ENCODE measurements at regions of chr12 and their contacts with region 1.

Region 1: DNA sequence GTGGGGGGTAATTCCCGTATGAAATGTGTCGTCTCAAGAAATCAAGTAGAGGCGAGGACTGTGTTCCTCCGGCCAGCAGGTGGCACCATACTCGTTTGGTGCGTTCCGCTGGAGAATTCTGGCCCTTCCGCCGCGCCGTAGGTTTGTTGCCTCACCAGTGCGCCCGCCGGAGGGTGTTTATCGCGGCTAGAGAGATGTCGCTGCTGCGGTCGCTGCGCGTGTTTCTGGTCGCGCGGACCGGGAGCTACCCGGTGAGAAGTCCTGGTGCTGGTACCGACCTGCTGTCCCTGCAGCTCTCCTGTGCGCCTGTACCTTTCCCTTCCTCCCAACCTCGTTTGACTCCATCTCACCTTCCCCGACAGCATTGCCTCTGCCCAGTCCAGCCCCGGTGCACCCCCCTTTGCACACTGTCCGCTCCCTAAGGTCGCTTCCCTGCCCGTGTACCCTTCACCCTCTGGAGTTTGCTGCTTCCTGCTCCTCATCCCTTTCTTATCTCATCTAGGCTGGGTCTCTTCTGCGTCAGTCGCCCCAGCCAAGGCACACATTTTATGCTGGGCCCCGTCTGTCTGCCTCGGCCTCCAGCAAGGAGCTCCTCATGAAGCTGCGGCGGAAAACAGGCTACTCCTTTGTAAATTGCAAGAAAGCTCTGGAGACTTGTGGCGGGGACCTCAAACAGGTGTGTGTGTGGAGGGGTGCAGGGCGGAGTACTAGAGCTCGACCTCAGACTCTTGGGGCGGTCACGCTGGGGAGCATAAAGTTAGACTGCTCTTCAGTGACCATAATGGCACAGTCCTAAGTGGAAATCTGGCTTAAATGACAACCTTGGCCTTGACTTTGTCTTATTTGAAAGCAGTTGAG is at the start of gene TSFM:
- DNase-seq: peak; percentile 93 to 94
- ATAC-seq: peak; percentile 96
- H3K4me3 ChIP-seq: peak within 1 kb of the TSS; percentile 89 to 98 (median 94)
- H3K27ac ChIP-seq: peak within 1 kb of the TSS; percentile 80 to 89 (median 85)
- H3K4me1 ChIP-seq: peaks cover 9 to 15% of the 10 kb centered on the region in 2 donors
- H3K27me3 ChIP-seq: no peaks in the 10 kb centered on the region
- CTCF ChIP-seq: peak; percentile 95 to 99 (median 97)
- POLR2A ChIP-seq: peak; percentile 56 to 75
- total RNA-seq, gene TSFM: 37.6 to 47.5 (median 40.1) TPM

Region 2: GRCh38 chr12:57744777-57745484 is 37.9 kb before region 1 on chr12 and contains the start of gene TSPAN31:
- in situ Hi-C with region 1: no loop called
- intact Hi-C with region 1: loop called (anchors 5 kb)
- DNase-seq: peak; percentile 96 to 97
- ATAC-seq: peak; percentile 97 to 98
- H3K4me3 ChIP-seq: peak within 1 kb of the TSS; percentile 81 to 96 (median 94)
- H3K27ac ChIP-seq: peak within 1 kb of the TSS; percentile 93 to 99 (median 98)
- H3K4me1 ChIP-seq: peaks cover 6 to 12% of the 10 kb centered on the region in 2 donors
- H3K27me3 ChIP-seq: peaks cover 0 to 6% (median 3%) of the 10 kb centered on the region in 3 donors
- CTCF ChIP-seq: peak in 1 of 5 experiments; percentile 11
- POLR2A ChIP-seq: peak; percentile 49 to 65
- total RNA-seq, gene TSPAN31: 25.5 to 58.9 (median 32.2) TPM

Region 3: GRCh38 chr12:57771708-57772428 is 11.0 kb before region 1 on chr12 and contains the start of gene METTL1:
- in situ Hi-C with region 1: no loop called
- intact Hi-C with region 1: loop called (anchors 1 kb)
- DNase-seq: peak; percentile 89 to 92
- ATAC-seq: peak; percentile 92 to 97
- H3K4me3 ChIP-seq: peak within 1 kb of the TSS; percentile 79 to 97 (median 90)
- H3K27ac ChIP-seq: peak within 1 kb of the TSS; percentile 84 to 94 (median 87)
- H3K4me1 ChIP-seq: peaks cover 18 to 20% of the 10 kb centered on the region in 2 donors
- H3K27me3 ChIP-seq: peaks cover 2 to 4% (median 4%) of the 10 kb centered on the region in 3 donors
- CTCF ChIP-seq: no peak
- POLR2A ChIP-seq: peak; percentile 44 to 45
- total RNA-seq, gene METTL1: 6.5 to 22.7 (median 17.9) TPM

Region 4: GRCh38 chr12:57836442-57837375 is 53.9 kb after region 1 on chr12:
- in situ Hi-C with region 1: no loop called
- intact Hi-C with region 1: loop called (anchors 5 kb)
- DNase-seq: peak in 1 of 2 donors; percentile 58
- ATAC-seq: peak; percentile 13 to 14
- H3K4me3 ChIP-seq: peak overlapping the region; percentile 21 to 34 (median 24)
- H3K27ac ChIP-seq: peak overlapping the region; percentile 93 to 99 (median 98)
- H3K4me1 ChIP-seq: peaks cover 98 to 100% of the 10 kb centered on the region in 2 donors
- H3K27me3 ChIP-seq: no peaks in the 10 kb centered on the region
- CTCF ChIP-seq: no peak
- POLR2A ChIP-seq: no peak

Region 5: GRCh38 chr12:58034311-58035098 is 251.7 kb after region 1 on chr12:
- in situ Hi-C with region 1: no loop called
- intact Hi-C with region 1: no loop called
- DNase-seq: no peak
- ATAC-seq: no peak
- H3K4me3 ChIP-seq: no peak overlapping the region
- H3K27ac ChIP-seq: no peak overlapping the region
- H3K4me1 ChIP-seq: no peaks in the 10 kb centered on the region
- H3K27me3 ChIP-seq: no peaks in the 10 kb centered on the region
- CTCF ChIP-seq: no peak
- POLR2A ChIP-seq: no peak

Measured in gastrocnemius medialis (tissue), 4 donors.